ENCODE measurements at regions of chr6 and their contacts with region 1.

Region 1: GRCh38 chr6:1363729-1364572 is 25.4 kb upstream of the FOXF2 start:
- H3K4me3 ChIP-seq: no peak overlapping the region
- H3K27ac ChIP-seq: no peak overlapping the region
- H3K4me1 ChIP-seq: no peaks in the 10 kb centered on the region
- CTCF ChIP-seq: peak; percentile 37; the same call in 1 of the 2 replicates

Region 2: GRCh38 chr6:1381481-1382330 is 17.8 kb after region 1 on chr6:
- CTCF ChIA-PET with region 1: interaction called, 13 read pairs
- POLR2A ChIA-PET with region 1: no interaction called
- H3K4me3 ChIP-seq: peak overlapping the region; percentile 46
- H3K27ac ChIP-seq: peak overlapping the region; percentile 63; the same call in 1 of the 2 replicates
- H3K4me1 ChIP-seq: no peaks in the 10 kb centered on the region; the same call in 1 of the 2 replicates
- CTCF ChIP-seq: peak; percentile 99